ENCODE measurements at regions of chr3 and their contacts with region 1.

Region 1: GRCh38 chr3:161851941-161852566 is 355.4 kb downstream of the OTOL1 start:
- DNase-seq: peak in 2 of 9 donors; percentile 5 to 35
- ATAC-seq: no peak
- H3K4me3 ChIP-seq: no peak overlapping the region
- H3K4me3 Mint-ChIP-seq: no peak overlapping the region
- H3K27ac ChIP-seq: no peak overlapping the region
- H3K27ac Mint-ChIP-seq: no peak overlapping the region
- H3K4me1 ChIP-seq: no peaks in the 10 kb centered on the region
- H3K4me1 Mint-ChIP-seq: peaks cover 0 to 2% (median 0%) of the 10 kb centered on the region in 7 donors
- H3K27me3 ChIP-seq: no peaks in the 10 kb centered on the region
- H3K27me3 Mint-ChIP-seq: no peaks in the 10 kb centered on the region

Region 2: GRCh38 chr3:161508863-161509477 is 343.1 kb before region 1 on chr3:
- CTCF ChIA-PET with region 1: no interaction called
- POLR2A ChIA-PET with region 1: no interaction called
- intact Hi-C with region 1: loop called in 1 of 2 experiments (anchors 10 kb)
- DNase-seq: no peak
- ATAC-seq: no peak
- H3K4me3 ChIP-seq: no peak overlapping the region
- H3K4me3 Mint-ChIP-seq: no peak overlapping the region
- H3K27ac ChIP-seq: no peak overlapping the region
- H3K27ac Mint-ChIP-seq: no peak overlapping the region
- H3K4me1 ChIP-seq: no peaks in the 10 kb centered on the region
- H3K4me1 Mint-ChIP-seq: peaks cover 0 to 4% (median 0%) of the 10 kb centered on the region in 7 donors
- H3K27me3 ChIP-seq: no peaks in the 10 kb centered on the region
- H3K27me3 Mint-ChIP-seq: peaks cover 0 to 10% (median 0%) of the 10 kb centered on the region in 5 donors